ENCODE measurements at regions of chr22 and their contacts with region 1.

Region 1: DNA sequence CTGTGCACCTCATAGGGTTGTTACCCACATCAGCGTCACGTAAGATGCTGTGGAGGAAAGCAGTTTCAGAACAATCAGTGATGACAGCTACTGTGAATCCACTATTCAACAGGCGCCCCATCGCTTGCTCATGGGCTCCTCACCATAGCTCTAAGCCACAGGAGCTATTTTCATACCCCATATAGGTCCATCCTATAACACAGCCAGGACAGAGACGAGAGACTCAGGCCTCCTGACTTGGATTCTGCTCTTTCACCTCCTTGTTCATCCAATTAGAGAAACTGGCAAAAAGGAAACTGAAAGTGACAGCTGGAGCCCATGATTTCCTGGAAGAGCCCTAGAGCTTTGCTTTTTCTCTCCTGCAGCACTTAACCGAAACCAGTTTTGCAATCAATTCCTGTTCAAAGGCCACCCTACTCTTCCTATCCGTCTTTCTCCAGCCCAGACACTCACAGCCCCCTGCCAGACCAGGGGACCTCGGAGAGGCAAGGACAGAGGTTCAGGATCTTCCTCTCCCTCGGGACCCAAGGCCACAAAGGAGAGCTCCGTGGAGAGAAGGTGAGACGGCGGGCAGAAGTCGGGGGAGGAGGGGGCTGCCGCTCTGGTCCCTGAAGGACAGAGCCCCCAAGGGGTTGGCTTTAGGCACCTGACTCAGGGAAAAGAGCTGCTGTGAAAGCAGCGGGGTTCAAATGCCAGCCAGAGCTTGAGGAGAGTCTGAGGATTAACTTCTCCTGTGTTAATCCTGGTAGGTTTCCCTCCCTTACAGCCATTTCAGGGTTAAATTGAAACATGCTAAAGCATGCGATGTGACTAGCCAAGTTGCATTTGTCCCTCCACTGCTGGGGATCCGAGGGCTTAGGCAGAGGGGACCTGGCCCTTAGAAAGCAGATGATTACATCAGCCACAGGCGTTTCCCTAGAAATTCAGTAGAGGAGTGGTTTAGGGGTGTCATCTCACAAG is at the start of gene APOL6:
- DNase-seq: peak; percentile 74
- ATAC-seq: peak; percentile 79
- H3K4me3 Mint-ChIP-seq: peak within 1 kb of the TSS; percentile 90
- H3K27ac Mint-ChIP-seq: peak within 1 kb of the TSS; percentile 100
- H3K4me1 Mint-ChIP-seq: peaks cover 36% of the 10 kb centered on the region
- H3K27me3 Mint-ChIP-seq: no peaks in the 10 kb centered on the region
- total RNA-seq, gene APOL6: 34.3 to 35.5 TPM

Region 2: GRCh38 chr22:35660291-35661127 is 12.2 kb after region 1 on chr22:
- CTCF ChIA-PET with region 1: interaction called, 3 read pairs
- POLR2A ChIA-PET with region 1: interaction called, 15 read pairs
- intact Hi-C with region 1: loop called (anchors 1 to 2 kb)
- DNase-seq: peak; percentile 56
- ATAC-seq: peak; percentile 75
- H3K4me3 Mint-ChIP-seq: no peak overlapping the region
- H3K27ac Mint-ChIP-seq: peak overlapping the region; percentile 88
- H3K4me1 Mint-ChIP-seq: peaks cover 75% of the 10 kb centered on the region
- H3K27me3 Mint-ChIP-seq: no peaks in the 10 kb centered on the region

Region 3: GRCh38 chr22:35678836-35679235 is 30.5 kb after region 1 on chr22:
- CTCF ChIA-PET with region 1: interaction called, 4 read pairs
- POLR2A ChIA-PET with region 1: no interaction called
- intact Hi-C with region 1: loop called (anchors 1 kb)
- DNase-seq: no peak
- ATAC-seq: peak; percentile 62
- H3K4me3 Mint-ChIP-seq: no peak overlapping the region
- H3K27ac Mint-ChIP-seq: peak overlapping the region; percentile 44
- H3K4me1 Mint-ChIP-seq: peaks cover 22% of the 10 kb centered on the region
- H3K27me3 Mint-ChIP-seq: no peaks in the 10 kb centered on the region

Region 4: GRCh38 chr22:35697142-35697541 is 48.8 kb after region 1 on chr22:
- CTCF ChIA-PET with region 1: no interaction called
- POLR2A ChIA-PET with region 1: no interaction called
- intact Hi-C with region 1: loop called in 1 of 2 experiments (anchors 1 kb)
- DNase-seq: peak; percentile 76
- ATAC-seq: peak; percentile 70
- H3K4me3 Mint-ChIP-seq: no peak overlapping the region
- H3K27ac Mint-ChIP-seq: no peak overlapping the region
- H3K4me1 Mint-ChIP-seq: no peaks in the 10 kb centered on the region
- H3K27me3 Mint-ChIP-seq: peaks cover 4% of the 10 kb centered on the region

Region 5: GRCh38 chr22:36028646-36029405 is 380.5 kb after region 1 on chr22 and contains the start of gene RBFOX2:
- CTCF ChIA-PET with region 1: no interaction called
- POLR2A ChIA-PET with region 1: no interaction called
- intact Hi-C with region 1: loop called in 1 of 2 experiments (anchors 5 kb)
- DNase-seq: peak; percentile 87
- ATAC-seq: peak; percentile 83
- H3K4me3 Mint-ChIP-seq: peak within 1 kb of the TSS; percentile 80
- H3K27ac Mint-ChIP-seq: peak within 1 kb of the TSS; percentile 72
- H3K4me1 Mint-ChIP-seq: peaks cover 20% of the 10 kb centered on the region
- H3K27me3 Mint-ChIP-seq: peaks cover 2% of the 10 kb centered on the region
- total RNA-seq, gene RBFOX2: 6.9 to 7.7 TPM

Region 6: GRCh38 chr22:36156515-36157419 is 508.4 kb after region 1 on chr22:
- CTCF ChIA-PET with region 1: no interaction called
- POLR2A ChIA-PET with region 1: no interaction called
- intact Hi-C with region 1: loop called in 1 of 2 experiments (anchors 5 kb)
- DNase-seq: peak; percentile 89
- ATAC-seq: peak; percentile 72
- H3K4me3 Mint-ChIP-seq: peak overlapping the region; percentile 84
- H3K27ac Mint-ChIP-seq: peak overlapping the region; percentile 99
- H3K4me1 Mint-ChIP-seq: peaks cover 94% of the 10 kb centered on the region
- H3K27me3 Mint-ChIP-seq: no peaks in the 10 kb centered on the region